ENCODE measurements at regions of chr9 and their contacts with region 1.

Region 1: GRCh38 chr9:135961277-135961705 is at the start of gene UBAC1:
- DNase-seq: peak; percentile 94 to 98 (median 96)
- H3K4me3 ChIP-seq: peak within 1 kb of the TSS; percentile 59 to 99 (median 90)
- H3K27ac ChIP-seq: peak within 1 kb of the TSS in 55 of 59 donors; percentile 10 to 94 (median 81)
- H3K27me3 ChIP-seq: no peaks in the 10 kb centered on the region
- CTCF ChIP-seq: peak in 54 of 56 donors; percentile 26 to 71 (median 56)
- total RNA-seq, gene UBAC1: 42.5 to 80.5 (median 55.0) TPM

Region 2: DNA sequence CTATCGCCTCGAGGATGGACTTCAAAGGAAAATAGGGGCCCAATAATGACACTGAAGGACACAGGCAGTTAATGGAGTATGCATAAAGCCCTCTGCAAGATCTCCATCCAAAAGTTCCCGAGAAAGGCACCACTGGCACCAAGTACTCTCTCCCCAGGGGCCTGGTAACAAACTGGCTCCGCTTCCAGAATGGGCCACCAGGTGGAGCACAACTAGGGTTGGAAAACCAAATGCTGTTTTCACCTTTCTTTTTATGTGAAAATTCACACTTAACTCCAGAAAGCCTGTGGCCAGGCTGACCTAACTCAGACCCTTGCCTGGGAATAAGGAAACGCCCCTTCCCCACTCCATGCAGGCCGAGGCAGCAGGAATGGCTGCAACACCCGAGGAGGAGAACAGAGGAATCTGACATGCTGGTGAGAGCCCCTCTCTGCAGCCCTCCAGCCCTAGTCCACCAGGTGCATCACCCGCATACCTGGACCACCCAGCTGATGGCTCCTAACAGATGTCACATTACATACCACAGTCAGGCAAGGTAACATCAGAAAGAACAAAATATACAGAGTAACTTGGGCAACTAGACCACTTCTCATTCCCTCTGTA is 96.7 kb before region 1 on chr9:
- intact Hi-C with region 1: loop called in 1 of 2 experiments (anchors 5 kb)
- DNase-seq: peak in 9 of 10 donors; percentile 59 to 80 (median 74)
- H3K4me3 ChIP-seq: no peak overlapping the region
- H3K27ac ChIP-seq: peak overlapping the region in 12 of 59 donors; percentile 5 to 61 (median 26)
- H3K27me3 ChIP-seq: no peaks in the 10 kb centered on the region
- CTCF ChIP-seq: peak; percentile 75 to 94 (median 89)

Region 3: DNA sequence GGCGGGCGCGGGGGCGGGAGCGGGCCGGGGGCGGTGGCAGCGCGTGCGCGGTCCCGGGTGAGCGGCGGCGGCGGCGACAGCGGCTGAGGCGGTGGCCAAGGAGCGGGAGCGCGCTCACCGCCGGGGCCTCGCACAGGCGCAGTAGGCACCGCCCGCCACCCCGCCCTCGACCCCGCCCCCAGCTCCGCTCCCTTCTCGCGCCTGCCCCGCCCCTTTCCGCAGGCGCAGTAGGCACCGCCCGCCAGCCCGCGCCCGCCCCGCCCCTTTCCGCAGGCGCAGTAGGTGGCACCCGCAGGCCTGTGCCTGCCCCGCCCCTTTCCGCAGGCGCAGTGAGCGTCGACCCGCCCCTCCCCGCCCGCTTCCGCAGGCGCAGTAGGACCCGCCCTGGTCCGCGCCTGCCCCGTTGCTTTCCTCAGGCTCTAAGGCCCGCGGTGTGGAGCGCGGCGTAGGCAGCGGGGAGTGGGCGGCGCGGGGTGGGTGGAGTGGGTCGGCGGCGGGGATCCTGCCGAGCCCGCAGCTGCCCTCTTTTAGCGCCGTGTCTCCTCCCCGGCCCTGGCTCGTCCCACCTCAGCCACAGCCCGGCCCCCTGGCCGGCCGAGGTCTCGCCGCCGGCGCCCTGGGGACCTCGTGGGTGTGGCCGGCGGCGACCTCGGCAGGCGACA is 53.7 kb before region 1 on chr9 and contains the start of gene CAMSAP1:
- intact Hi-C with region 1: loop called (anchors 1 to 5 kb)
- DNase-seq: peak; percentile 70 to 91 (median 84)
- H3K4me3 ChIP-seq: peak within 1 kb of the TSS; percentile 69 to 97 (median 87)
- H3K27ac ChIP-seq: peak within 1 kb of the TSS in 56 of 59 donors; percentile 5 to 91 (median 79)
- H3K27me3 ChIP-seq: no peaks in the 10 kb centered on the region
- CTCF ChIP-seq: peak in 7 of 56 donors; percentile 7 to 28 (median 18)
- total RNA-seq, gene CAMSAP1: 59.6 to 100 (median 81.1) TPM

Region 4: DNA sequence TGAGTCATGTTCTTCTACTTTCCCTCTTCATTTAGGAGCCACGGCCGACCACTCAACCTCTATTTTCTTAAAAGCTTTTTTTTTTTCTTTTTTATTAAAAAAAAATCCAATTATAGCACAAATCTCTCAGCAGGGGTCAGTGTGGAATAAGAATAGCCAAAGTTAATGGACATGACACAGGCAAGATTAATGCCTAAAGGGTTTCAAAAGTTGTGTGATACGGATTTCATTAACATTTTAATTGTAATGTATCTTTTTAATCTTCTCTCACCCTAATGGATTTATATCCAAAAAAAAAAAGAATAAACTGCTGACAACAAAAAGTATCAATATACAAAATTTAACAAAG is 128.4 kb after region 1 on chr9:
- intact Hi-C with region 1: loop called in 1 of 2 experiments (anchors 10 kb)
- DNase-seq: no peak
- H3K4me3 ChIP-seq: peak overlapping the region in 2 of 59 donors; percentile 15 to 30
- H3K27ac ChIP-seq: peak overlapping the region in 42 of 59 donors; percentile 6 to 94 (median 65)
- H3K27me3 ChIP-seq: no peaks in the 10 kb centered on the region
- CTCF ChIP-seq: peak in 53 of 56 donors; percentile 23 to 73 (median 50)

Region 5: GRCh38 chr9:136138566-136138965 is 177.3 kb after region 1 on chr9:
- intact Hi-C with region 1: no loop called
- DNase-seq: no peak
- H3K4me3 ChIP-seq: no peak overlapping the region
- H3K27ac ChIP-seq: no peak overlapping the region
- H3K27me3 ChIP-seq: peaks cover 0 to 54% (median 15%) of the 10 kb centered on the region in 45 donors
- CTCF ChIP-seq: peak in 3 of 56 donors; percentile 7 to 27 (median 10)

Region 6: DNA sequence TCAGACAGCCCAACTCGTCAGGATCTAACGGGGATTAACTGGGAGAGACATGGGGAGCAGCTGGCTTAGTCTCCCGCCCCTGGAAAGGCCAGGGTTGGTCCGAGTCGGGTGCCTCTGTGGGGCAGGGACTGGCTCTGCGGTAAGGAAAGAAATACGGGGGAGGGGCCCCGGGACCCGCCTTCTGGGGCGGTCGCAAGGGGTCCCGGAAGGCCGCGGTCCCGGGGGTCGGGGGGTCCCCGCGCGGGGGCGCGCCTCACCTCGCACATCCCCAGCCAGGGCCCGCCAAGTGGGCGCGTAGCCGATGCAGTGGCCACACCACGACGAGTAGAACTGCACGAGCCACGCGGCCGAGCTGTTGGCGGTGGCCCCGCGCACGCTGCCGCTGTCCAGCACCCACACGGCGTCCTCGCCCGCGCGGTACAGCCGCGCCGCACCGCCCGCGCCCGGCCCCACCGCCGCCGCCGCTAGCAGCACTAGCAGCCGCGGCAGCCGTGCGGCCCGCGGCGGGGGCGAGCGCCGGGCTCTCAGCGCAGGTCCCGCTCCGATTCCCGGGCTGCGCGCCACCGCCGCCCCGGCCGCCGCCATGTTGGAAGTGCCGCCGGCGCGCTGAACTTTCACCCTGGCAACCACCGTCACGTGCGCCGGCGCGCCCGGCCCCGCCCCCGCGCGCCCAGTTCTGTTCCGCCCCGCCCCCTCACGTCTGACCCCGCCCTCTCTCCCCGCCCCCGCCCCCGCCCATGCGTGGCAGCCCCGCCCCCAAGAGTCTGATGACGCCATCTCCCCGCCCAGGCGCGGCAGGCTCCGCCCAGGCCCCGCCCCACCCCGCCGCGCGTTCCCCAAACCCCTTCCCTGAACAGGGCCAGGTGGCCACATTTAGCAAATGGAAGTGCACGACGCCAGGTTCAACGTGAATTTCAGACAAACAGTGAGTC is 284.2 kb after region 1 on chr9 and contains the start of gene QSOX2:
- intact Hi-C with region 1: loop called in 1 of 2 experiments (anchors 5 kb)
- DNase-seq: peak; percentile 70 to 89 (median 82)
- H3K4me3 ChIP-seq: peak within 1 kb of the TSS; percentile 50 to 89 (median 77)
- H3K27ac ChIP-seq: peak within 1 kb of the TSS in 30 of 59 donors; percentile 8 to 71 (median 52)
- H3K27me3 ChIP-seq: no peaks in the 10 kb centered on the region
- CTCF ChIP-seq: peak in 4 of 56 donors; percentile 12 to 21 (median 18)
- total RNA-seq, gene QSOX2: 9.6 to 20.4 (median 14.1) TPM